Tibial artery (tissue), 4 donors: ENCODE measurements at regions of chr9 and their contacts with region 1.

Region 1: GRCh38 chr9:96566498-96567207 is 53.0 kb downstream of the CDC14B start:
- DNase-seq: peak; percentile 81 to 94
- H3K4me3 ChIP-seq: peak overlapping the region; percentile 77 to 91
- H3K27ac ChIP-seq: peak overlapping the region; percentile 94 to 97
- H3K4me1 ChIP-seq: peaks cover 0 to 38% (median 9%) of the 10 kb centered on the region in 4 donors
- H3K27me3 ChIP-seq: no peaks in the 10 kb centered on the region
- CTCF ChIP-seq: peak; percentile 60 to 65

Region 2: GRCh38 chr9:96418074-96418809 is 148.4 kb before region 1 on chr9 and contains the start of gene ZNF367:
- intact Hi-C with region 1: loop called (anchors 10 kb)
- DNase-seq: peak; percentile 98 to 99
- H3K4me3 ChIP-seq: peak within 1 kb of the TSS; percentile 67 to 75
- H3K27ac ChIP-seq: peak within 1 kb of the TSS; percentile 95 to 98
- H3K4me1 ChIP-seq: peaks cover 11 to 34% (median 25%) of the 10 kb centered on the region in 4 donors
- H3K27me3 ChIP-seq: no peaks in the 10 kb centered on the region
- CTCF ChIP-seq: peak in 1 of 2 experiments; percentile 4

Region 3: DNA sequence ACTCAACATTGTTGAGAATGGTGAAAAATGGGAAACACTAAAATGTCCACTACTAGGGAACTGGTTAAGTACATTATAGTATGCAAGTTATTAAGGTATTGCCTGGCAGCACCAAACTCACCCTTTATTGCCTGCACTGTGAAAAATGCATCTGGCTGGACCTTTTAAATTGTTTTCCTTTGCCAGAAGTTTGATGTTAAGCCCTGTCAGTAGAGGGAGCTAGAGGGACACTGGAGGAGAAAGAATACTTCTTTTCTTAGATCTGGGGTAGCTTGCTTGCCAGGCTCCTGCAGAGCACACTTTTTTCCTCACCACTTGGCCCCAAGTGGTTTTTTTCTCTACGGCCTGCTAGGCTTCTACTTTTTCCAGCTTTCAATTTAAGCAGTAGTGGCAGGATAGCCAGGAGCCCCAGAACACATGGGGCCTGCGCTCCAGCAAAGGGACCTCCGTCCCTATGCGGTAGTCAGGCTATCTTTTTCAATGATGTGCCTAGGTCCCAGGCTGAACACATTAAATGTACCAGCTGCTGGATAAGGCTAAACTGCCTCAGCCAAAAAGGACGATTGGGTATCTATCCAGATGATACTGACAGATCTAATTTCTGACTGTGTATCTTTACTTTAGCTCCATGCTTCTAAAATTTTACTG is 124.7 kb before region 1 on chr9:
- intact Hi-C with region 1: no loop called
- DNase-seq: no peak
- H3K4me3 ChIP-seq: no peak overlapping the region
- H3K27ac ChIP-seq: no peak overlapping the region
- H3K4me1 ChIP-seq: no peaks in the 10 kb centered on the region
- H3K27me3 ChIP-seq: no peaks in the 10 kb centered on the region
- CTCF ChIP-seq: peak in 1 of 2 experiments; percentile 10

Region 4: DNA sequence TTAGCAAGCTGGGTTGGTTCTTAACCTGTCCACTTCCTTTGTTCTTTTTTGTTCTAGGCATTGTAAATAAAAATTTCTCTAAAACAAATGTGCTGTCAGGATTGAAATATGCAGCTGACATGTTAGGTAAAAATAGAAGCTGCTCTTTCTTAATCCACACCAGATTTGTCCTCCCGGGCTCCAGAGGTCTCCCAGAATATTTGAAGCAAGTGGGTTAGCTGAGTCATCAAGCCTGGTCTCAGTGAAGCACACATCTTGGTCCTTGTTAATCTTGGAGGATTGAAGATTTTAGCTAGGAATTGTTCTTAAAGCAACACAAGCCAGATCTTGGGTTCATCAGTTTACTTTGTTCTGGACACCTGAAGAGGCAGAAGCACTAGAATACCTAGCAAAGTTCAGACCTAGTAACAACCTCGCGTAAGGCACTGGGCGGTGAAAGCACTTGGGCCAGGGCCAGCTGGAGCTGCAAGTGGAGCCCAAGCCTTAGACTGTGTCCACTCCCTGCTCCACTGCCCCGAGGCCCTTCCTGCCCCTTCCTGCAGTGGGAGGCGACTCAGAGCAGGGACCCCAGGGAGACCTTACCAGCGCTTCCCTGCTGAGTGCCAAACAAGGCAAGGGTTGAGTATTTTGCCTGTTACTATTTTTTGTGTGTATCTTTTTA is 80.2 kb before region 1 on chr9:
- intact Hi-C with region 1: loop called (anchors 10 kb)
- DNase-seq: peak; percentile 79 to 87
- H3K4me3 ChIP-seq: peak overlapping the region in 1 of 2 donors; percentile 16
- H3K27ac ChIP-seq: peak overlapping the region; percentile 81 to 85
- H3K4me1 ChIP-seq: peaks cover 0 to 82% (median 50%) of the 10 kb centered on the region in 4 donors
- H3K27me3 ChIP-seq: no peaks in the 10 kb centered on the region
- CTCF ChIP-seq: no peak

Region 5: DNA sequence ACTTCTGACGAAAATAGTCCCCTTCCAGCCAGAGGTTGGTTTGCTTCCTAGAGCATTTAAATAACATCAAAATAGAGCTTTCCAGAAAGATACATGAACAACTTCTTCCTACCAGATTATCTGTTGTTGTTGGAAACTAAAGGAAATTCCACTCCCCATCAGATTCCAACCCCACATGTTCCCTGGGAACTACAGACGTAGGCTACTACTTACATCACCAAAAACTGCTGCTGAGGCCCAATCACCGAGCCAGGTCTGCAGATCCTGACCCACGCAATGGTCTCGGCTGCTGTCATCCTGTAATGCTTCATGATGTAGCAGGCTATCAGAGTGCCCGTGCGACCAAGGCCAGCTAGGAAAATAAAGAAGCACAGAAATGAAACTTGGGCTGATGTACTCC is 43.3 kb before region 1 on chr9:
- intact Hi-C with region 1: loop called (anchors 5 kb)
- DNase-seq: peak; percentile 78 to 93
- H3K4me3 ChIP-seq: peak overlapping the region; percentile 35 to 47
- H3K27ac ChIP-seq: peak overlapping the region; percentile 85 to 86
- H3K4me1 ChIP-seq: peaks cover 6 to 67% (median 31%) of the 10 kb centered on the region in 4 donors
- H3K27me3 ChIP-seq: no peaks in the 10 kb centered on the region
- CTCF ChIP-seq: no peak

Region 6: GRCh38 chr9:96654443-96655197 is 88.0 kb after region 1 on chr9:
- intact Hi-C with region 1: no loop called
- DNase-seq: peak; percentile 83 to 95
- H3K4me3 ChIP-seq: peak overlapping the region; percentile 66 to 82
- H3K27ac ChIP-seq: peak overlapping the region; percentile 99 to 100
- H3K4me1 ChIP-seq: peaks cover 0 to 20% (median 6%) of the 10 kb centered on the region in 4 donors
- H3K27me3 ChIP-seq: no peaks in the 10 kb centered on the region
- CTCF ChIP-seq: peak in 1 of 2 experiments; percentile 44

Region 7: GRCh38 chr9:96665789-96666188 is 99.1 kb after region 1 on chr9:
- intact Hi-C with region 1: no loop called
- DNase-seq: no peak
- H3K4me3 ChIP-seq: no peak overlapping the region
- H3K27ac ChIP-seq: no peak overlapping the region
- H3K4me1 ChIP-seq: no peaks in the 10 kb centered on the region
- H3K27me3 ChIP-seq: peaks cover 0 to 5% of the 10 kb centered on the region in 2 donors
- CTCF ChIP-seq: no peak